Dorsolateral prefrontal cortex (tissue), 120 donors: ENCODE measurements at regions of chr18 and their contacts with region 1.

Region 1: DNA sequence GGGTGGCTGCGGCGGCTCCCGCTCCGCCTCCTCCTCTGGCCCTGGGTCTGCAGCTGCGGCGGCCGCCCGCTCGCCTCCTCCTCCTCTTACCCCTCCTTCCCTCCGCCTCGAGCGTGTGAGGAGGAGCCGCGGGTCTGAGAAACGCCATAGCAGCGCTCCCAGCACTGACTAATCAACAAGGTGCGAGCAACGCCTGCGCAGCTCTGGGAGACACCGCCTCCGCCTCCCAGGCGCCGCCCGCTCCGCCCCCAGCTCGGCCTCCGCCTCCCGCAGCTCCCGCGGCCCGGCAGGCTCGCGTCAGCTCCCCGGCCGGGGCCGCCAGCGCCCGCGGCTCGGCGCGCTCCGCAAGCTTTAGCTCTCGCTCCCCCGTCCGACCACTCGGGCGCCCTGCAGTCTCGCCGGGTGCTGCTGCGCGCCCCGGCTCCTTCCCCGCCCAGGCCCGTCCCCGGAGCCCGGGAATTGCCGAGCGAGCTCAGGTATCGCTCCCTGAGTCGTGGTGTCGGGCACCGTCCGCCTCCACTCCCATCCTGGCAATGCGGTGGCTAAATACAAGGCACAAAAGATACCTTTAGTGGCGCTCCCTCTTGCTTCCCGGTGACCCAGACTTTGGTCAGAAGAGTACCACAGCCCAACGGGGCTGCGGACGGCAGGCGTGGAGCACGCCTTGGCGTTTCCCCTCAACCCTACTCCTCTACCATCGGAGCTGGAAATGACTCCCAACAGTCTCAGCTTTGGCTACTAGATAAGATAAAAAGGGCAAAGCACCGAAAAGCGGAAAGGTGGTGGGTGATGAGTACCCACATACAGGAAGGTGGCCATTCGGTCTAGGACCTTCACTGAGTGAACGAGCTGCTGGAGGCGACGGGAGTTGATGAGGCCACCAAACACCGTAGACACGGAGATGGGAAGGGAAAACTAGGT is at the start of gene GAREM1:
- DNase-seq: peak; percentile 88 to 97 (median 96)
- H3K4me3 ChIP-seq: peak within 1 kb of the TSS; percentile 67 to 95 (median 85)
- H3K27ac ChIP-seq: peak within 1 kb of the TSS in 58 of 59 donors; percentile 1 to 93 (median 86)
- H3K27me3 ChIP-seq: no peaks in the 10 kb centered on the region
- CTCF ChIP-seq: peak in 55 of 56 donors; percentile 56 to 96 (median 79)
- total RNA-seq, gene GAREM1: 16.7 to 42.4 (median 26.5) TPM

Region 2: DNA sequence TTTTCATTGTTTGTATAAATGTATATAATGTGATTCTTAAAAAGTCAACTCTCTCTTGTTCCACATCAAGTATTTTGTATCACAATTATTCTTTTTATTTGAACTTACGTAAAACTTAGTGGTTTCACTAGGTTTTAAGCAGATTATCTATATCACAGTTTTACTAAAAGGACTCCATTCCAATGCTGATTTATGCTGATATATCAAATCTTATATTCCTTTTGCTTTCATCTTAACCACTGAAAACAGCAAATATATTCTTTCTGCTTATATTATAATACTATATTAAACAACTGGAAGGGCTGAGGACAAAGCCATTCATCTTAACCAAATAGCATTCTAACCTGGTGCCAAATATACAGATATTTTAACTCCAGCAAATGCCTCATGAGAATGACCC is 552.2 kb before region 1 on chr18:
- intact Hi-C with region 1: no loop called
- DNase-seq: no peak
- H3K4me3 ChIP-seq: no peak overlapping the region
- H3K27ac ChIP-seq: no peak overlapping the region
- H3K27me3 ChIP-seq: no peaks in the 10 kb centered on the region
- CTCF ChIP-seq: no peak

Region 3: GRCh38 chr18:32238635-32239268 is 232.2 kb before region 1 on chr18:
- intact Hi-C with region 1: no loop called
- DNase-seq: no peak
- H3K4me3 ChIP-seq: no peak overlapping the region
- H3K27ac ChIP-seq: no peak overlapping the region
- H3K27me3 ChIP-seq: no peaks in the 10 kb centered on the region
- CTCF ChIP-seq: no peak

Region 4: DNA sequence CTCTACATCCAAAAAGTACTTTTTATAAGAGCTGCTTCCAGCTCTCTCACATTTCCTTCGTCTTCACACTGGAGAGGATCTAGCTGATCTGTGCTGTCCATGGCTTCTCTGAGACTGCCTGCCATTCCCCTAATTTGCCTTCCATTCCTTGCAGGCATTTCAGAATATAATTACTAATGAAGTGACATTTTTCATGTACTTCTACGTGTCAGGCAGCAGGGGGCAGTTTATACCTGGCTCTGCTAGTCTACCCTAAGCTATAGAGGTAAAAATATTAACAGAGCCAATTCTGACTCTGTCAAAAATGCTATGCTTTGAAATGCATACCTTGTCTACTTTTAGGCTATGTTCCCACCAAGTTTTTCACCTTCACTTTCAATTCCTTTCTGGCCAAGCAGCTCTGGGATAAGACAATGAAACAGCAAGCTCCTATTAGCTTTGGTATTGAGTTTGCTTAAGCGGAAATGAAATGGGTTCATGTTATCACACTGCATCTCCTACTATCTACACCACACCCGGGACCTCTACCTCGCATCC is 199.2 kb before region 1 on chr18:
- intact Hi-C with region 1: loop called (anchors 5 kb)
- DNase-seq: peak in 1 of 10 donors; percentile 51
- H3K4me3 ChIP-seq: no peak overlapping the region
- H3K27ac ChIP-seq: peak overlapping the region in 3 of 59 donors; percentile 5 to 31 (median 31)
- H3K27me3 ChIP-seq: no peaks in the 10 kb centered on the region
- CTCF ChIP-seq: peak; percentile 51 to 84 (median 73)

Region 5: DNA sequence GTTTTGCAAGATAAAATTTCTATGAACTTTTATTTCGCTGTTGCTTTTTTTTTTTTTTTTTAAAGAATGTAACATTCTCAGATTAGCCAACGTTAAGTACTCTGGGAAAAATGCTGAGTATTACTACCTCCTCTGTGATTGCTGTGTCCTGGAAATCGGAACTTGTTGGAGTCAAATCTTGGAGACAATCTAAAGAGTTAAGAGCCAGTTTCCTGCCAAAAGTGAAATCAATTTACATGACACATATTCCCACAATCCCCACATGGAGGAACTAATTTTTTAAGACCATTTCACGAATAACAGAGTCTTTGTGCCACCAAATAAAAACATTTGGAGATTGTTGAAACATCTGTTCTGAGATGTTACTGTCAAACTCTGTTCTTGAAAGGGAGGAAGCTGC is 153.3 kb before region 1 on chr18:
- intact Hi-C with region 1: no loop called
- DNase-seq: no peak
- H3K4me3 ChIP-seq: no peak overlapping the region
- H3K27ac ChIP-seq: peak overlapping the region in 7 of 59 donors; percentile 16 to 50 (median 32)
- H3K27me3 ChIP-seq: no peaks in the 10 kb centered on the region
- CTCF ChIP-seq: no peak

Region 6: GRCh38 chr18:32333781-32334180 is 137.2 kb before region 1 on chr18:
- intact Hi-C with region 1: loop called in 1 of 2 experiments (anchors 5 kb)
- DNase-seq: peak in 9 of 10 donors; percentile 28 to 65 (median 58)
- H3K4me3 ChIP-seq: peak overlapping the region in 2 of 59 donors; percentile 9 to 10
- H3K27ac ChIP-seq: peak overlapping the region in 33 of 59 donors; percentile 1 to 73 (median 48)
- H3K27me3 ChIP-seq: no peaks in the 10 kb centered on the region
- CTCF ChIP-seq: peak in 40 of 56 donors; percentile 1 to 54 (median 28)

Region 7: DNA sequence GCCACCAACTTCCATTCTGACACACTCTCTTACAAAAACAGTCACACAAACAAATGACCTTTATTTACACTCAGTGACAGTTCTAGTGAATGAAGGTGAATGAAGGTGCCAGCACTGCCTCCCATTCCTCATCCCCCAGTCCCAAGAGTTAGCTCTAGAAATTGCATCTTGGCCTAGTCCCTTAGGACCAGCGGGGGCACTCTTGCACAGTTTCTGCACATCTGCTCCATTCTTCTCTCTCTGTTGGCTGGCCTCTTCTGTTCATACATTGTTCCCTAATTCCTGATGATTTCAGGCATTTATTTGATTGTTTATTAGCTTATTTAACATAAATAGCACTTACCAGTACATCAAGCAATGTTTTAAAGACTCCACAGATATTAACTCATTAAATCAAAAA is 31.2 kb before region 1 on chr18:
- intact Hi-C with region 1: loop called (anchors 2 kb)
- DNase-seq: peak in 5 of 10 donors; percentile 25 to 58 (median 47)
- H3K4me3 ChIP-seq: peak overlapping the region in 3 of 59 donors; percentile 3 to 63 (median 21)
- H3K27ac ChIP-seq: peak overlapping the region in 53 of 59 donors; percentile 0 to 90 (median 76)
- H3K27me3 ChIP-seq: no peaks in the 10 kb centered on the region
- CTCF ChIP-seq: peak in 49 of 56 donors; percentile 13 to 64 (median 40)